ENCODE measurements at regions of chr22 and their contacts with region 1.

Region 1: GRCh38 chr22:21982338-21982965 is at the start of gene TOP3B:
- DNase-seq: peak; percentile 99 to 100 (median 100)
- ATAC-seq: peak; percentile 84
- H3K4me3 ChIP-seq: peak within 1 kb of the TSS; percentile 63
- H3K27ac ChIP-seq: peak within 1 kb of the TSS; percentile 70
- H3K4me1 ChIP-seq: peaks cover 13 to 26% of the 10 kb centered on the region in 2 experiments; a peak in 4 of 5 replicates
- H3K27me3 ChIP-seq: no peaks in the 10 kb centered on the region; a peak in 1 of 5 replicates
- CTCF ChIP-seq: peak in 1 of 3 experiments; percentile 30; a peak in 1 of 6 replicates
- EP300 ChIP-seq: peak; percentile 93
- POLR2A ChIP-seq: no peak
- RAD21 ChIP-seq: no peak
- polyA plus RNA-seq, gene TOP3B: 3.0 to 11.5 TPM

Region 2: GRCh38 chr22:21952586-21953571 is 29.6 kb before region 1 on chr22 and contains the start of gene PPM1F:
- CTCF ChIA-PET with region 1: interaction called, 3 read pairs
- POLR2A ChIA-PET with region 1: interaction called, 382 read pairs
- in situ Hi-C with region 1: no loop called
- intact Hi-C with region 1: no loop called
- DNase-seq: peak; percentile 100
- ATAC-seq: peak; percentile 84
- H3K4me3 ChIP-seq: peak within 1 kb of the TSS; percentile 66
- H3K27ac ChIP-seq: peak within 1 kb of the TSS; percentile 68
- H3K4me1 ChIP-seq: peaks cover 25 to 39% of the 10 kb centered on the region in 2 experiments
- H3K27me3 ChIP-seq: no peaks in the 10 kb centered on the region
- CTCF ChIP-seq: peak; percentile 99 to 100 (median 100)
- EP300 ChIP-seq: peak; percentile 72
- POLR2A ChIP-seq: no peak
- RAD21 ChIP-seq: no peak
- polyA plus RNA-seq, gene PPM1F: 2.1 to 4.5 TPM

Region 3: DNA sequence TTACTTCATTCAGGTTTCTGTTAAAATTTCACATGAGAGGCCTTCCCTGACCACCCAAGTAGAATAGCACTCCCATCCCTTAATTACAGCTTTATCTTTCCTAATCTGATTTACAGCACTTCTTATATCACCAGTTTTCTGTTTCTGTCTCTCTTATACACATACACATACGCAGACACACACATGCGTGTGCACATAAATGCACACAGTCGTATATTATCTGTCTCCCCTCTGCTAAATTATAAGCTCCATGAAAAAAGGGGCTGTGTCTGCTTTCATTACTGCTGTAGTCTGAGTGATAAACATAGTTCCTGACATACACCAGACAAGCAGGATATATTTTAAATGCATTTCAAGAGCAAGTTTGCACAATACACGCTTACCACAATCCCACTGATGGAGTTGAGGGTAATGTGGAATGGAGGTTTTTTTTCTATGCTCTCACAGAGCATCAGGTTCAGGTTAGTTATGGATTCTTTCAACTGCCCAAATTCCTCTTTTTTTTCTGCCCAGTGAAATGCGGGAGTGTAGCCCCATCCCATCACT is 13.8 kb after region 1 on chr22:
- CTCF ChIA-PET with region 1: no interaction called
- POLR2A ChIA-PET with region 1: interaction called, 176 read pairs
- in situ Hi-C with region 1: no loop called
- intact Hi-C with region 1: no loop called
- DNase-seq: no peak
- ATAC-seq: no peak
- H3K4me3 ChIP-seq: no peak overlapping the region
- H3K27ac ChIP-seq: no peak overlapping the region
- H3K4me1 ChIP-seq: peaks cover 9 to 22% of the 10 kb centered on the region in 2 experiments
- H3K27me3 ChIP-seq: no peaks in the 10 kb centered on the region
- CTCF ChIP-seq: no peak
- EP300 ChIP-seq: no peak
- POLR2A ChIP-seq: no peak
- RAD21 ChIP-seq: no peak

Region 4: DNA sequence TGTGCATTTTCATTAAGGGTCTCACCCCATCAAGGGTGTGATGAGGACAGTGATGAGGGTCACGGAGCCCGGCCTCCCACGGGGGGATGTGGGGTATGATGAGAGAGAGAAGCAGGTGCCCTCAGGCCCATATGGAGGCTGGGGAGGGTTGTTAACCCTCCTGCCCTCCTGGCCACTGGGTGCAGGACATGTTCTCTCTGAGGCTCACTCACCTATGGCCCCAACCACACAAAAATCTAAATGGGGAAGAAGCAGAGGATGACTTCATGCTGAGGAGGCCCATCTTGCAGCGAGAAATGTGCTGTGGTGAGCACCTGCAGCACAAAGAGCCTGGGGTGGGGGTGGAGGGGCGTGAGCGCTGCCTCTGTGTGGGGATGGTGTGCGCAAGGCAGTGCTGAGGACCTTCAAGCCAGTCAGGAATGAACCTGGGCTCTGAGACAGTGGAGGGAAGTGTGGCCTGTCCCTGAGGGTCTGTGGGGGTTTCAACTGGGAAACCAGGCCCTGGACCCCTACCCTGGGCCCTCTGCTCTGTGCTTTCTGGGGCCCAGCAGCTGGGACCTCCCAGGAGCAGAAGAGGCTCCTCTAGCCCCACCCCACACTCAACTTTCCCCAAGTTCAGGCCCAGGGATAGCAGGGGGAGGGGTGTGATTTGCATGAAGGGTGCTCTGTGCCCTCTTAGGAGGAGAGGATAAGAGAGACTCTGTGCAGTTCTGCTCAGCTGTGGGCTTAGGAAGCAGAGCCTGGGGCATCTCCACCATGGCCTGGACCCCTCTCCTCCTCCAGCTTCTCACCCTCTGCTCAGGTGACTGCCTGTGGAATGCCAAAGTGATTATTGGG is 43.1 kb after region 1 on chr22:
- CTCF ChIA-PET with region 1: no interaction called
- POLR2A ChIA-PET with region 1: interaction called, 8 read pairs
- in situ Hi-C with region 1: no loop called
- intact Hi-C with region 1: loop called (anchors 1 kb)
- DNase-seq: peak in 1 of 4 experiments; percentile 58
- ATAC-seq: peak; percentile 7; the same call in 2 of the 3 replicates
- H3K4me3 ChIP-seq: no peak overlapping the region
- H3K27ac ChIP-seq: no peak overlapping the region
- H3K4me1 ChIP-seq: peaks cover 15 to 20% of the 10 kb centered on the region in 2 experiments; a peak in 4 of 5 replicates
- H3K27me3 ChIP-seq: peaks cover 6 to 23% of the 10 kb centered on the region in 2 experiments; a peak in 2 of 5 replicates
- CTCF ChIP-seq: no peak
- EP300 ChIP-seq: no peak
- POLR2A ChIP-seq: no peak
- RAD21 ChIP-seq: no peak

Region 5: DNA sequence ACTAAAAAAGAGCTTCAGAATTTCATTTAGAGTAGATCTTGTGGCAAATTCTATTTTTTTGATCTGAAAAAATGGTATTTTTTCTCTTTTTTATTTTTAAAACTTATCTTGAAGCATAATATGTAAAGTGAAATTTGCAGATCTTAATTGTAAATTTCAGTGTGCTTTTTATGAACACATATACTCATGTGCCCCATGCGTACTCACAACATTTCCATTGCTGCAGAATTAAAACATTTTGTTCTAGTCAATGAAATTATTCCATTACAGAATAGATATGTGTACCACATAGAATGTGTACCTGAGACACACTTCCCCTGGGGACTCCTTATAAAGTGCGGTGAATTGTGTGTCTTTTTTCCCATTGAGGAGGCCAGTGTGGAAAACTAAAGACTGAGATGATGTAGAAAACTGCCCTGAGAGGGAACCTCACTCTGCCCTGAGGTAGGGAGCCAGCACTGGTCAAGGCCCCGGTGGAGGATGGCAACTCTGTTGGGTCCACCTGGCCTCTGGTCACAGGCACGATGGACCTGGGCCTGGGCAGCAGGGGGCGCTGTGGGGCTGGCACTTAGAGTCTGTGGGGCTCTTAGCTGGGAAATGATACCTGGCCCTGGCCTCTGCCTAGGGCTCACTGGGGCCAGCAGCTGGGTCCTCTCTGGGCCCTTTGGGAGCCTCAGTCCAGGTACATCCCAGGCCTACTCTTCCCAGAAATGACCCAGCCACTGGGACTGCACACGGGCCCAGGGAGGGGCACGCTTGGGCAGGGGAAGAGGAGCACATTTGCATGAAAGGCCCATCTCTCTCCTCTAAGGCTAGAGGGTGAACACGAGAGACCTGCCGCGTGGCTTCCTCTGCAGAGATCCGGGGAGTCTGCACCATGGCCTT is 78.0 kb after region 1 on chr22:
- CTCF ChIA-PET with region 1: interaction called, 19 read pairs
- POLR2A ChIA-PET with region 1: interaction called, 5 read pairs
- in situ Hi-C with region 1: no loop called
- intact Hi-C with region 1: loop called (anchors 1 kb)
- DNase-seq: peak; percentile 96 to 99 (median 98)
- ATAC-seq: peak; percentile 97
- H3K4me3 ChIP-seq: no peak overlapping the region
- H3K27ac ChIP-seq: no peak overlapping the region
- H3K4me1 ChIP-seq: peaks cover 3 to 5% of the 10 kb centered on the region in 2 experiments; a peak in 3 of 5 replicates
- H3K27me3 ChIP-seq: peaks cover 36 to 37% of the 10 kb centered on the region in 2 experiments
- CTCF ChIP-seq: peak in 1 of 3 experiments; percentile 99; a peak in 2 of 6 replicates
- EP300 ChIP-seq: peak; percentile 35
- POLR2A ChIP-seq: no peak
- RAD21 ChIP-seq: peak in 1 of 2 experiments; percentile 65; a peak in 2 of 4 replicates

Region 6: DNA sequence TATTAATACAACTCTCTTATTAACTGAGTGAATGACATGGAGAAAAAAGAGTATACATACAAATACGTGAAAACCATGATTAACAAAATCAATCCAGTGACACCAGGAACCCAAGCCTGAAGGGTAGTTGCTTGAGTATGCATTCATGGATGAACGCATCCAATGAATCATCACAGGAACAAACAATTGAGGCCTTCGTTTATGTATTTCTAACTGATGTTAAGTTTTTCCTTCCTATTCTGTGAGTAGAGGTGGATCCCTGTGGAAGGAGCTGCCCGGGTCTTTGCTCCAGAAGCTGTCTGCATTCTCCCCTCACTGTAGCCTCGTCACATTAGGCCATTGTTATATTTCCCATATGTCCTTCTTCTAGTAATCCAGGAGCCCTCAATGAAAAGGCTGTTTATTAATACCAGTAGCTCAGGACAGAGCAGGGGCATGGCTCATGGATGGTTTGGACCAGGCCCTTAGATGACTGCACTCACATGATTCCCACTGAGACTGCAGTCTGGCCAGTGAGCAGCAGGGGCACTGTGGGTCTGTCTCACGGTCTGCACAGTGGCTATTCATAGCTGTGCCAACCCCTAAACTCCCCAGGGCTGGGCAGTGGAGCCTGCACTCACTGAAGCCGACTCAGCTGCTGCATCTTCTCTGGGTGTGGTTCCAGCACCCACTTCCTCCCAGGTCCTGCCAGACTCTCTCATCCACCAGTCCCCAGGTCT is 128.3 kb after region 1 on chr22:
- CTCF ChIA-PET with region 1: no interaction called
- POLR2A ChIA-PET with region 1: interaction called, 12 read pairs
- in situ Hi-C with region 1: no loop called
- intact Hi-C with region 1: no loop called
- DNase-seq: peak; percentile 89 to 96 (median 94)
- ATAC-seq: peak; percentile 95
- H3K4me3 ChIP-seq: no peak overlapping the region
- H3K27ac ChIP-seq: 0 out of 3 replicates have a peak overlapping the region, but pooled peaks have one; percentile 2
- H3K4me1 ChIP-seq: peaks cover 13 to 36% of the 10 kb centered on the region in 2 experiments; a peak in 4 of 5 replicates
- H3K27me3 ChIP-seq: no peaks in the 10 kb centered on the region
- CTCF ChIP-seq: no peak
- EP300 ChIP-seq: no peak
- POLR2A ChIP-seq: no peak
- RAD21 ChIP-seq: peak in 1 of 2 experiments; percentile 35; a peak in 1 of 4 replicates

Measured in K562 (cell line).